PC-3 (cell line): ENCODE measurements at regions of chr14 and their contacts with region 1.

Region 1: GRCh38 chr14:103748534-103748857 is 32.9 kb downstream of the ZFYVE21 start:
- DNase-seq: no peak
- ATAC-seq: no peak
- H3K4me3 ChIP-seq: no peak overlapping the region
- H3K27ac ChIP-seq: no peak overlapping the region
- H3K4me1 ChIP-seq: peaks cover 9% of the 10 kb centered on the region
- H3K27me3 ChIP-seq: no peaks in the 10 kb centered on the region
- CTCF ChIP-seq: no peak

Region 2: GRCh38 chr14:103594265-103594664 is 154.2 kb before region 1 on chr14:
- CTCF ChIA-PET with region 1: no interaction called
- POLR2A ChIA-PET with region 1: no interaction called
- intact Hi-C with region 1: no loop called
- DNase-seq: peak; percentile 96
- ATAC-seq: peak; percentile 83
- H3K4me3 ChIP-seq: peak overlapping the region; percentile 47; the same call in 1 of the 2 replicates
- H3K27ac ChIP-seq: peak overlapping the region; percentile 97
- H3K4me1 ChIP-seq: peaks cover 51% of the 10 kb centered on the region
- H3K27me3 ChIP-seq: no peaks in the 10 kb centered on the region
- CTCF ChIP-seq: no peak

Region 3: DNA sequence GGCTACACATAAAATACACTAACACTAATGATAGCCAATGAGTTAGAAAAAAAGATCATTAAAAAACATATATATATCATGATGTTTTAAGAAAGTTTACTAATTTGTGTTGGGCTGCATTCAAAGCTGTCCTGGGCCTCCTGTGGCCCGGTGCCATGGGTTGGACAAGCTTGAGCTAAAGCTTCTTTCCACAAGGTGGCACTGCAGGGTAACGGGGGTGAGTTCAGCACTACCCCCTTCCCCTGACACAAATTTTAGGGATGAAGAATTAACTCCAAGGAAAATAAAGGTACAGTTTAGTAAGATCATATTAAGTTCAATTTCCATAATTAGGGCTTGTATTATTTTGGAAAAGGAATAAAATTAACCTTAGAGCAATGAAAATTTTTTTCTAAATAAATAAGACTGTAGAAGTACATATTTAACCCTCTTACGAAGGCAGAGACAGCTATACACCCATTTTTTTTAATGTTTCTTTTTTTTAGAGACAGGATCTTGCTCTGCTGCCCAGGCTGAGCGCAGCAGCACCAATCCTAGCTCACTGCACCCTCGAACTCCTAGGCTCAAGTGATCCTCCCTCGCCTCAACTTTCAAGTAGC is 60.0 kb after region 1 on chr14:
- CTCF ChIA-PET with region 1: no interaction called
- POLR2A ChIA-PET with region 1: no interaction called
- intact Hi-C with region 1: loop called (anchors 10 kb)
- DNase-seq: peak; percentile 88
- ATAC-seq: peak; percentile 91
- H3K4me3 ChIP-seq: no peak overlapping the region
- H3K27ac ChIP-seq: no peak overlapping the region
- H3K4me1 ChIP-seq: no peaks in the 10 kb centered on the region
- H3K27me3 ChIP-seq: no peaks in the 10 kb centered on the region
- CTCF ChIP-seq: peak; percentile 89

Region 4: DNA sequence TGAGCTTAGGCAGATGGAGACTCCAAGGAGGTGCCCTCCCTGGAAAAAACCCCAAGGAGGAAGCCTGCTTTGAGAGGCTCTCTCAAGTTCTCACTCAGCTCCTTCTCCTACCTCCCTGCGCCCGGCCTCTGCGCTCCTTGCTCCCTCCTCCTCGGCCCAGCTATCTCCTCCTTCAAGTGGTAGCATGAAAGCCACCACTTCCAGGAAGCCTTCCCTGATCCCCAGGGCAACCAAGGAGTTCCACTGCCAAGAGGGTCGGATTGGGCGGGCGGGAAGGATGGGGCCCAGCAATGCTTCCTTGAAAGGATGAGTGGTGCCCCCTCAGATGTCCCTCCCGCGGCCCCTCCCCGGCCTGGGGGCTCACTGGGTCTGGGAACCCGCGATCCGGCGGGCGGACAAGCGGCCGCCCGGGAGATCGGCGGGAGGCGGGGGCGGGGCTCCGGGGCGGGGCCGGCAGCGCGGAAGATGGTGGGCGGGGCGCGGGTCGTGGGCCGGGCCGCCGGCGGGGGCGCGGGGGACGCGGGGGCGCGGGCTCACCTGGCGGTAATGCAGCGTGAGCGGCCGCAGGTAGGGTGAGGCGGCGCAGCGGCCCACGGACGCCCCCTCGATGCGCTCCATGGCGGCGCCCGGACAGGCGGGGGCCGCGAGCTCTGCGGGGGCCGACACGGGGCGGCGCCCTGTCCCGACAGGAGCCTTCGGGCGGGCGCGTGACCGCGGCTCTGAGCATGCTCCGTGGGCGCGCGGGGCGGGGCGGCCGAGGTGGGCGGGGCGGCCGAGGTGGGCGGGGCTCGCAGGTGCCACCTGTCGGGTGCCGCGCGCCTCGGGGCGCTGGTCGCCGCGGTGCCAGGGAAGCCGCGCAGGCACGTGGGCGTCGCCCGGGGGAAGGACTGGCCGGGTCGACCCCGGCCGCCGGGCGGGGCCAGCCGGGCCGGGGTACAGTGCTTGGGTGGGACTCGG is 1432.4 kb after region 1 on chr14 and contains the start of gene NUDT14:
- CTCF ChIA-PET with region 1: no interaction called
- POLR2A ChIA-PET with region 1: interaction called, 11 read pairs
- intact Hi-C with region 1: no loop called
- DNase-seq: peak; percentile 77
- ATAC-seq: peak; percentile 87
- H3K4me3 ChIP-seq: peak within 1 kb of the TSS; percentile 73
- H3K27ac ChIP-seq: no peak within 1 kb of the TSS
- H3K4me1 ChIP-seq: 0 out of 2 replicates have a peak, but pooled peaks cover 6% of the 10 kb centered on the region
- H3K27me3 ChIP-seq: no peaks in the 10 kb centered on the region
- CTCF ChIP-seq: no peak
- total RNA-seq, gene NUDT14: 50.8 and 82.1 TPM in 2 replicates